SK-N-SH (cell line): ENCODE measurements at regions of chr20 and their contacts with region 1.

Region 1: DNA sequence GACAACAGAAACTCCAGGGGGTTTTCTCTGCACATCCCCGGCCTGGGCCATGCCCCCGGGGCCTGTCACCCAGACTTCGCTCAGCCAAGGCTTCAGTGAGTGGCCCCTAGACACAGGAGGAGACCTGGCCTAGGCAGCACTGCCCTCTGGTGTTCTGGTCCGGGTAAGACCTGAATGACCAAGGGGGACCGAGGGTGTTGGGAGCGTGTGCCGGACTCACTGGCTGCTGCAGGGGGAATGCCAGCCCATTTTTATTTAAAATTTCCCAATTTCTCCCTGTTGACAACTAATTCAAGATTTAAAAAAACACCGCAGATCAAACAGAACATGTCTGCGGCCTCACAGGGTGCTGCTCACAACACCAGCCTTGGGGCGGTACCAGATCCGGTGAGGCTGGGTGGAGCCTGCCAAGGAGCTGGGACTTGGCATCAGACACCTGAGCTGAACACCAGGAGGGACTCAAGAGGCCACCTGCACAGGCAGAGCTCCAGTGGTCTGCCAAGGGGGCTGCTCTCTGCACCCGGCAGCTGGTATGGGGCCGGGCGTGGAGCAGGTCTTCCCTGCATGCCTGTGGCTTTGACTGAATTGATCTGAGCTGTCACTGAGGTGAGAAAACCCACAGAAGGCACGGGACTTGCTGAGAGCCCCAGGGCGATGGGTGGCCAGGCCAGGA is 47.8 kb downstream of the DSTN start:
- DNase-seq: peak; percentile 91
- H3K4me3 ChIP-seq: no peak overlapping the region
- H3K27ac ChIP-seq: no peak overlapping the region
- H3K4me1 ChIP-seq: no peaks in the 10 kb centered on the region
- H3K27me3 ChIP-seq: no peaks in the 10 kb centered on the region
- CTCF ChIP-seq: peak; percentile 72
- EP300 ChIP-seq: no peak
- RAD21 ChIP-seq: peak; percentile 92

Region 2: GRCh38 chr20:17530716-17531664 is 86.7 kb before region 1 on chr20 and contains the start of gene BFSP1:
- CTCF ChIA-PET with region 1: interaction called, 96 read pairs
- POLR2A ChIA-PET with region 1: no interaction called
- DNase-seq: peak; percentile 84
- H3K4me3 ChIP-seq: peak within 1 kb of the TSS; percentile 49 to 55
- H3K27ac ChIP-seq: peak within 1 kb of the TSS in 1 of 2 experiments; percentile 37; a peak in 2 of 4 replicates
- H3K4me1 ChIP-seq: peaks cover 3 to 8% of the 10 kb centered on the region in 2 experiments; a peak in 2 of 4 replicates
- H3K27me3 ChIP-seq: no peaks in the 10 kb centered on the region
- CTCF ChIP-seq: no peak
- EP300 ChIP-seq: no peak
- RAD21 ChIP-seq: no peak
- polyA plus RNA-seq, gene BFSP1: 6.7 and 7.1 TPM in 2 replicates

Region 3: GRCh38 chr20:17542993-17543412 is 74.7 kb before region 1 on chr20:
- CTCF ChIA-PET with region 1: interaction called, 96 read pairs
- POLR2A ChIA-PET with region 1: no interaction called
- DNase-seq: no peak
- H3K4me3 ChIP-seq: peak overlapping the region in 1 of 2 experiments; percentile 7; a peak in 1 of 4 replicates
- H3K27ac ChIP-seq: peak overlapping the region; percentile 70 to 96; a peak in 3 of 4 replicates
- H3K4me1 ChIP-seq: peaks cover 0 to 15% of the 10 kb centered on the region in 2 experiments; a peak in 2 of 4 replicates
- H3K27me3 ChIP-seq: no peaks in the 10 kb centered on the region
- CTCF ChIP-seq: no peak
- EP300 ChIP-seq: peak in 1 of 2 experiments; percentile 14; a peak in 1 of 4 replicates
- RAD21 ChIP-seq: no peak

Region 4: DNA sequence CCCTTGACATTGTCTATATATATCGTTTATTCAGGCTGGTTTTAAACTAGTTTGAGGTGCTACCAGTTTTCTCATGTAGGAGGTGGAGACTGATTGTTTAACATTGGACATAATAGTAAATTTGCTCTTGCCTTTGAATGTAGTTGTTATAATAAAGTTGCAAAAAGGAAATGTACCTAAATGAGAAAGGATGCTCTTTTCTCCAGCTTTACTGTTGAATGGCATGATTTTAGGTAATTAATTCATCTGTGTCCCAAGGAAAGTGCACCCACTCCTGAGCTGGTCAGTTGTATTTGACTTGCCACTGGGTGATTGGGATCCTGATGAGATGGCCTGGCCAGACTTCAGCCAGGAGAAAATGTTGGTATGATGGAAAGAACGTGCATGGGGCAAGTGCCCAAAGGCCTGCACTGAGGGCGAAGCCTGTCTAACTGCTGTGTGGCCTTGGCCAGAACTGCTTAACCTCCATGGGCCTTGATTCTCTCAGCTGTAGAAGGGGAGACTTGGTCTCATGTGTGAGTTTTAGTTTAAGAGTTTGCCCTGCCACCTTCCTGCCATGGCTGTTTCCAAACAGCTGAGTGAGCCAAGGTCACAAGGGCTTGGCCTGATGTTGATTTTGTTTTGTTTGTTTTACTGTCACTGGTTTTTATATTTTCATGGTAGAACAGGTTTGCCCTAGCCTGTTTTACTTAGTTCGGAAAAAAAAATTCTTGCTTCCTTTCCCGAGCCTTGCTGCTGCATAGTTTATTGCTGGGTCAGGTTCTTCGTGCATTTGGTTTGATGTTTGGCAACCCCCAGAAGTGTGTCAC is 12.6 kb before region 1 on chr20:
- CTCF ChIA-PET with region 1: interaction called, 11 read pairs
- POLR2A ChIA-PET with region 1: no interaction called
- DNase-seq: no peak
- H3K4me3 ChIP-seq: no peak overlapping the region
- H3K27ac ChIP-seq: no peak overlapping the region
- H3K4me1 ChIP-seq: peaks cover 0 to 1% of the 10 kb centered on the region in 2 experiments; a peak in 2 of 4 replicates
- H3K27me3 ChIP-seq: no peaks in the 10 kb centered on the region
- CTCF ChIP-seq: no peak
- EP300 ChIP-seq: no peak
- RAD21 ChIP-seq: no peak

Region 5: DNA sequence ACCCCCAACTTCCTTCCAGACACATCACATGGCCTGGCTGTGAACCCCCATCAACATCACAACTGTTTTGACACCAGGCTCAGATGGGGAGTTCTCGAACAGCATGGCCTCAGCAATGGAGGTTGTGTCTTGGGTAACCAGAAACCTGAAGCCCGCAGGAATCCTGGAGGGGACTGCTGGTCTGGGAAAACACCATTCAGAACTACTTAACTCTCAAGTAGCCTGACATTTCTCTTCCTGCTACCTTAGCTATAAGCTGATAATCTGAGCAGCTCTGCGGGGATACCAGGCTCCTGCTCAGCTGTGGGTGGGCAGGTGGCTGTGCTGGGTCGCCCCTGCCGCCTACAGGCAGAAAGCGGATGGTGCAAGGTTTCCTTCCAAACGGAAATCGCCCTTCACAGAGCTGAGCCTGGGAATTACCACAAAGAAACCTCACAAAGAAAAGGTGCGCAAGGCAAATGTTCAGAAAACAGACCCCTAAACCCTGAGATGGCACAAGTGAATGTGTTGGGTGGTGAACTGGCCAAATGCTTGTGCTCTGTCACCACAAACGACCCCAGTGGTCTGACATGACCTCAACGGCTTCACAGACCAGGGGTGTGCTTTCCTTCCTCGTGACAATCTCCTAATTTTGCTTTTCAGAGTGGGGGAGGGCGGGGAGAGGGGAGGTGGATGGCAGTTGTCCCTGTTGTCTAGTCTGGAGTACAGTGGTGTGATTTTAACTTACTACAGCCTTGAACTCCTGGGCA is 321.4 kb after region 1 on chr20:
- CTCF ChIA-PET with region 1: interaction called, 11 read pairs
- POLR2A ChIA-PET with region 1: no interaction called
- DNase-seq: peak; percentile 80
- H3K4me3 ChIP-seq: no peak overlapping the region; a peak in 1 of 4 replicates
- H3K27ac ChIP-seq: no peak overlapping the region
- H3K4me1 ChIP-seq: peaks cover 0 to 11% of the 10 kb centered on the region in 2 experiments; a peak in 1 of 4 replicates
- H3K27me3 ChIP-seq: no peaks in the 10 kb centered on the region
- CTCF ChIP-seq: peak; percentile 77
- EP300 ChIP-seq: no peak
- RAD21 ChIP-seq: peak; percentile 84

Region 6: DNA sequence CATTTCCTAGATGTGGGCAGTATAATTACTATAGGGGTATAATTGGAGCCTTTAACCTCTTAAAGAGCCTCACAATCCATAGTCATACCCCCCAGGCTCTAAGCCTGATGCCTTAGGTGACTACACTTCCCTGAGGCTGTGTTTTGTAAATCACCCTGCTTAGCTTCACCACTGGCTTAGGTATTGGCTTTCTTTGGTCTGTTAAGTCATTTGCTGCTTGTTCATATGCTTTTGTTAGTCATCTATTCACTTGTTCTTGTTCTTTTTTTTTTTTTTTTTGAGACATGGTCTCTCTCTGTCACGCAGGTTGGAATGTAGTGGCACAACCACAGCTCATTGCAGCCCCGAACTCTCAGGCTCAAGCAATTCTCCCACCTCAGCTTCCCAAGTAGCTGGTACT is 546.7 kb after region 1 on chr20:
- CTCF ChIA-PET with region 1: no interaction called
- POLR2A ChIA-PET with region 1: no interaction called
- DNase-seq: no peak
- H3K4me3 ChIP-seq: no peak overlapping the region
- H3K27ac ChIP-seq: no peak overlapping the region
- H3K4me1 ChIP-seq: peaks cover 0 to 2% of the 10 kb centered on the region in 2 experiments; a peak in 1 of 4 replicates
- H3K27me3 ChIP-seq: no peaks in the 10 kb centered on the region
- CTCF ChIP-seq: no peak
- EP300 ChIP-seq: no peak
- RAD21 ChIP-seq: no peak

Region 7: GRCh38 chr20:18314786-18315406 is 697.2 kb after region 1 on chr20:
- CTCF ChIA-PET with region 1: no interaction called
- POLR2A ChIA-PET with region 1: no interaction called
- DNase-seq: no peak
- H3K4me3 ChIP-seq: no peak overlapping the region
- H3K27ac ChIP-seq: no peak overlapping the region
- H3K4me1 ChIP-seq: no peaks in the 10 kb centered on the region
- H3K27me3 ChIP-seq: no peaks in the 10 kb centered on the region
- CTCF ChIP-seq: no peak
- EP300 ChIP-seq: no peak
- RAD21 ChIP-seq: no peak